Posterior vena cava (tissue), 2 donors: ENCODE measurements at regions of chr7 and their contacts with region 1.

Region 1: GRCh38 chr7:111558991-111559390 is 3.3 kb downstream of the IMMP2L start:
- DNase-seq: no peak

Region 2: DNA sequence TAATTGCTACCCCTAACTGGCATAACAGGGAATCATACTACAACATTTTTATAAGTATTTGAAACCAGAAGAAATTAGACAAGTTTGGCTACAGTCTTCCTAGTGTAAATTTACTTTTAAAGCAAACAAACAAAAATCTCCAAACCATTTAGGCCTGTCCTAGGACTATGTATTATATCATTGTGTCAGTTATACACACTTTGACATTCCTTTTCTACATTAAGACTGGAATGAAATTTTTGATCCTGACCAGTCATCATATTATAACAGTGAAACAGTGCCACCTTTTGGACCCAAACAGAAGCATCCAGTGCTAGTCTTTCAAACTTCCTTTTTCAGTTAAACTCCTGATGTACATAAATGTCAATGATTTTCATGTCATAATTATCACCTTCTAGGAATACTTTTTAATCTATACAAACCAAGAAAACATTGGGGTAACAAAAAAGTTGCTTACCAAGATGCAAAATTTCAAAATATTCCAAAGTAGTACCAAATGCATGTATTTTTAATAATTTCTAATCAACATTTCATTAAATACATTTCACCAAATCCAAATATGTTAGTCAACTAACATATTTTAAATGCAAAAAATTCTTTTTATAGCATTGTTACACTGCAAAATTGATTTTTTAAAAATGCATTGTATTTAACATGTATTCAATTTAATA is 72.4 kb before region 1 on chr7:
- intact Hi-C with region 1: loop called in 1 of 2 experiments (anchors 2 kb)
- DNase-seq: no peak

Region 3: DNA sequence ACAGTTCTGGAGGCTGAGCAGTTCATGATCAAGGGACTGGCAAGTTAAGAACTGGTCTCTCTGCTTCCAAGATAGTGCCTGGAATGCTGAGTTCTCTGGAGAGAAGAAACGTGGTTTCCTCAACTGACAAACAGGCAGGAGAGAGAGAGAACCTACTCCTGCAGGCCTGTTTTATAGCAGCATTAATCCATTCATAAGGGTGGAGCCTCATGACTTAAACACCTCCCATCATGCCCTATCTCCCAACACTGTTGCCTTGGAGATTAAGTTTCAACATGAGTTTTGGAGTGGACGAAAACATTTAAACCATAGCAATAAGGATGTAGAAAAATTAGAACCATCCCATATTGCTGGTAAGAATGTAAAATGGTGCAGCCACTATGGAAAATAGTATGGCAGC is 35.6 kb after region 1 on chr7:
- intact Hi-C with region 1: no loop called
- DNase-seq: no peak